ENCODE measurements at regions of chr10 and their contacts with region 1.

Region 1: GRCh38 chr10:93376372-93377293 is 105.5 kb downstream of the MYOF start:
- DNase-seq: peak; percentile 67
- H3K4me3 ChIP-seq: no peak overlapping the region; the same call in 1 of the 2 replicates
- CTCF ChIP-seq: peak; percentile 71

Region 2: DNA sequence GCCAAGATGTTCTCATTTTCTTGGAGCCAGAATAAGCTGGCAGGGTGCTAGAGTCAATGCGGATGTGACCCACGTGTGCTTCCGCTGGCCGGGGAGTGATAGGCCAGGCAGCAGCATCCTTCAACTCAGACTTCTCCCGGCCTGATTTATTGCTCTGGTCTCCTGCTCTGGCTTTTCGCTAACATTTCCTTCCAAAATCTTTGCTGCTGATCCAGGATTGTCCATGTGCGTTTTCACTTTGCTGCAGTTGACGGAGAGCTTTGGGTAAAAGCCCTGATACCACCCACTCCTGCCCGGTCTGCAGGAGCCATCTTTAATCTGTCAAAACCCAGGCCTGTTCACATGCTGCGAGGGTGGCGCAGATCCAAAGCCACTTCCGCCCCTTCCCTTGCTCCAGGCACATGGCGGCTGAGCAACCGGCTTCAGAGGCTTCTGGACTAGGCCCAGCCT is 196.1 kb before region 1 on chr10:
- CTCF ChIA-PET with region 1: no interaction called
- POLR2A ChIA-PET with region 1: no interaction called
- DNase-seq: no peak
- H3K4me3 ChIP-seq: no peak overlapping the region
- CTCF ChIP-seq: no peak

Region 3: GRCh38 chr10:93386631-93387369 is 10.2 kb after region 1 on chr10:
- CTCF ChIA-PET with region 1: interaction called, 65 read pairs
- POLR2A ChIA-PET with region 1: interaction called, 3 read pairs
- DNase-seq: no peak
- H3K4me3 ChIP-seq: no peak overlapping the region
- CTCF ChIP-seq: no peak

Region 4: GRCh38 chr10:93420091-93420490 is 43.5 kb after region 1 on chr10:
- CTCF ChIA-PET with region 1: interaction called, 12 read pairs
- POLR2A ChIA-PET with region 1: no interaction called
- DNase-seq: no peak
- H3K4me3 ChIP-seq: no peak overlapping the region
- CTCF ChIP-seq: no peak

Region 5: DNA sequence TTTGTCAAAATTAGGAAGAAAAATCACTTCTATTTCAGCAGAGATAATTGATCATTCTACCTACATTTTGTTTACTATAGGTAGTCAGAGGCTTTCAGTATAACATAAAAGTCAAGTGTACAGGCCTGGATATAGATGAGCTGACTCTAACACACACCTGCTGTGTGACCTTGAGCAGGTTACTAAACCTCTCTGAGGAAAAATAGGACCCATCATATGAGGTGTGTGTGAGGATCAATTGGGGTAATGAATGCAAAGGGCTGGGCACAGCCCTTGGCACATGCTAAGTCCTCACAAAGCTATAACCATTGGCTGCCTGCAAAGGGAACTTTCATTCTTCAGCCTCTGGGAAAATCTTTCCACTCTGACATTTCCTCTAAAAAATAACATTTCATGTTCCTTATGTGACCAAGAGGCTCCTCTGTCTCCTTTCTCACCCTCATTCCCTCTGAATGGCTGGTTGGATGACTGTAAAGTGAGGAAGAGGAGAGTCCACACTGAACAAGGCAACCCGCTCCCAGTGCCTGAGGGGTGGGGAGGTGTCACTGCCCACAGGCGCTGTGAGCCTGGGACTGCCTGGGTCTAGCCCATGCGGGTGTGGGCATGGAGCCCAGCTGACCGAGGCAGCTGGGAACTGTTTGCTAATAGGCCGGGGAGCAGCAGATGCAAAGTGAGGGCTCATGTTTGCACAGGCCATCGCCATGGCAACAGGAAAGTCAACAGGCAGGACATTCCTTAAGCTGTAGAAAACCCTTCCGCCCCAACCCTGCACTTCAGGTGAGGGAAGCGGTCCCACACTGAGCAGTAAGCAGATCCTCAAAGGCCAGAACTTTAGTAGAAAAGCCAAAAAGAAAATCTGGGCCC is 68.7 kb after region 1 on chr10:
- CTCF ChIA-PET with region 1: interaction called, 44 read pairs
- POLR2A ChIA-PET with region 1: no interaction called
- DNase-seq: peak; percentile 89
- H3K4me3 ChIP-seq: no peak overlapping the region
- CTCF ChIP-seq: no peak

Region 6: DNA sequence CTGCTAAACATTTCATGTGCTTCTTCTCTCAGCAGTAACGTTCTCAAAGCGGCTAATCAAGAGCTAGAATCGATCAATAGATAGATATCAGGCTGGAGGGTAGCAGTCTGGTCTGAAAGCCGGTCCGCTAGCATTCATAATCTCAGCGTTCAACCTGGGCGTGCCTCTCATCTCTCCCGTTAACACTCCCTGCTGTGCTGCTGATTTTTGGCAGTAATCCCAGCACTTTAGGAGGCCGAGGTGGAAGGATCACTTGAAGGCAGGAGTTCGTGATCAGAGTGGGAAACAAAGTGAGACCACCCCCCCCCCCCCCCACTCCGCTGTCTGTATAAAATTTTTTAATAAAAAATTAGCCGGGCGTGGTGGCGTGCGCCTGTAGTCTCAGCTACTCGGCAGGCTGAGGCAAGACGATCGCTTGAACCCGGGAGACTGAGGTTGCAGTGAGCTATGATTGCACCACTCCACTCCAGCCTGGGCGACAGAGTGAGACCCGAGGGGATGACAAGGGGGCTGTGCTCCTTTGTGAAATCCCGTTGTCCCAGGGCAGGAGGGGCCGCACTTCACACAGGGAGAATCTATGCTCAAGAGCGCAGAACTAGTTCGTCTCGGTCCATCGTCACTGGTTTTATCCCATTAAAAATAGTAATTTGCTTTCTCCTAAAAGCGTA is 119.2 kb after region 1 on chr10:
- CTCF ChIA-PET with region 1: interaction called, 434 read pairs
- POLR2A ChIA-PET with region 1: no interaction called
- DNase-seq: no peak
- H3K4me3 ChIP-seq: peak overlapping the region; percentile 76
- CTCF ChIP-seq: no peak

Region 7: DNA sequence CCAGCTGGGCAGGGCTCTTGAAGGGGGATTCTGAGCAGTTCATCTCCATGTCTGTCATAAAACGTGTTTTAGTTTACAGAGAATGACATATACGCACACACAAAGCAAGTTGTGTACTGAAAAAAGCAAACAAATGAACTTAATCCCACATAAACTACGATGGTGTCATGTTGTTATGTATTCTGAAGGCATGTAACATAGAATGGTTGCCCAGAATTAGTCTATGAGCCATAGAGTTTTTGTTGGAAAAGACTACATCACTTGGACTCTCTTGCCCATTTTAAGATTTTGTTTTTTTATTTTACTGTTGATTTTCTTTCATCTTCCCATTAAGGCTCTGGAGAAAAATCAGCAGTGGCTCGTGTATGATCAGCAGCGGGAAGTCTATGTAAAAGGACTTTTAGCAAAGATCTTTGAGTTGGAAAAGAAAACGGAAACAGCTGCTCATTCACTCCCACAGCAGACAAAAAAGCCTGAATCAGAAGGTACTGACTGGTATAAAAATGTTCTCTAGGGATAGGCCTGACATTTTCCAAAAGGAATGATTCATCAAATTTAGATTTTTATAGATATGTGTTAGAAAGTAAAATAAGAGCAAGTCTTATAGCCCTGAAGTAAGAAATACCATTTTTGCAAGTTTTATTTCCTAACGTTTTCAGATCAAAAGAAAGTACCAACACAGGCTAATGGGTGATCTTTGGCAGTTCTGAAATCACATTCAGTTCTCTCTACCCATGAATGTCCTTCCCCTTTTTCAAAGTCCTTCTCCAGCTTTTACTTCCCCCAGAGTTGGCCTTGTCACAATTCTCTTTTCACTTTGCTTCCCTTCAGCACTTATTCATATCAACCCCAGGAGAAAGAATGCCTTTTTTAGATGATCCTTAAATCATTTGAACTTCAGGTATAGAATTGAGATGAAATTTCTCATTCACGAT is 138.7 kb after region 1 on chr10:
- CTCF ChIA-PET with region 1: interaction called, 45 read pairs
- POLR2A ChIA-PET with region 1: no interaction called
- DNase-seq: no peak
- H3K4me3 ChIP-seq: no peak overlapping the region
- CTCF ChIP-seq: no peak